ENCODE measurements at regions of chr1 and their contacts with region 1.

Region 1: DNA sequence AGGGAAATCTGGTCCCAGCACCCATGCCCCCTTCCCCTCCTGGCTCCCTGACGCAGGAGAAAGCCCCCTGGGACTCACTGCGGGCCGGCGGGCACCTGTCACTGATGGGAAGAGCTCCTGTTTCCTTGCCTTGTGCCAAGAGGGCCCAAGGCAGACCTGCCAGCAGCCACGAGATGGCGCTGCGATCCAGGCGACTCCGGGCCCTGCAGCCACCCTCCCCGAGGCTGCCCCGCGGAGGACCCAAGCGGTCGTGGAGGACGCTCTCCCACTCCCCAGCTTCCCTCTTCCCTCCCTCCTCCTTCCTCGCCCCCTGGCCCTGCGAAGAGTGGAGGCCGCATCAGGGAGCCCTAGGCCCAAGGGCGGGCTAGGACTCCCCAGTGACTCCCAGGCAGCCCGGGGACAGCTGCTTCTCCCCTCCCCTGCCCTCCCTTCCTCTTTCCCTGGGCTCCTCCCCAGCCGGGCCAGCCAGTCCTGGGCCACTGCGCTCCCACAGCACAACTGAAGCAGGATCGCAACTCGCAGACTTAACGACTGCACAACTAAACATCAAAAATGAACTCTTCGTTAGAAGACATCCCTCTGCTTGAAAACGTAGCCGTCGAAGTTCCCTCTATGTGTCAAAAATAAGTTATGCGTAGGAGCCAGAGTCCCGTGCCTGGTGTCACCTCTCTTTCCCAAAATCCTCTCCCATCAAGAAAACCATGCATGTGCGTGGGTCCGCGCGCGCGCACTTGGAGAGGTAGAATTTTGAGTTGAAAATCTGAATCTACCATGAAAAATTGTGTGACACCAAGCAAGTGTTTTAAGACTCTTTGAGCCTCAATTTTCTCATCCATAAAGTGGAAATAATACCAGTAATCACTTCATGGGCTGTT is 34.2 kb downstream of the BATF3 start:
- DNase-seq: peak; percentile 81
- H3K4me3 ChIP-seq: peak overlapping the region in 2 of 3 experiments; percentile 39 to 40
- H3K27ac ChIP-seq: peak overlapping the region; percentile 41
- H3K4me1 ChIP-seq: peaks cover 27% of the 10 kb centered on the region
- H3K27me3 ChIP-seq: peaks cover 3 to 4% of the 10 kb centered on the region in 2 experiments
- CTCF ChIP-seq: peak; percentile 90 to 98
- POLR2A ChIP-seq: no peak

Region 2: GRCh38 chr1:212595787-212596714 is 69.4 kb before region 1 on chr1:
- CTCF ChIA-PET with region 1: interaction called, 8 read pairs
- POLR2A ChIA-PET with region 1: no interaction called
- dilution Hi-C with region 1: no loop called
- intact Hi-C with region 1: loop called (anchors 1 kb)
- DNase-seq: peak; percentile 96
- H3K4me3 ChIP-seq: peak overlapping the region in 1 of 3 experiments; percentile 41
- H3K27ac ChIP-seq: peak overlapping the region; percentile 99
- H3K4me1 ChIP-seq: peaks cover 15% of the 10 kb centered on the region
- H3K27me3 ChIP-seq: peaks cover 8 to 11% of the 10 kb centered on the region in 2 experiments
- CTCF ChIP-seq: peak; percentile 55 to 81
- POLR2A ChIP-seq: no peak

Region 3: DNA sequence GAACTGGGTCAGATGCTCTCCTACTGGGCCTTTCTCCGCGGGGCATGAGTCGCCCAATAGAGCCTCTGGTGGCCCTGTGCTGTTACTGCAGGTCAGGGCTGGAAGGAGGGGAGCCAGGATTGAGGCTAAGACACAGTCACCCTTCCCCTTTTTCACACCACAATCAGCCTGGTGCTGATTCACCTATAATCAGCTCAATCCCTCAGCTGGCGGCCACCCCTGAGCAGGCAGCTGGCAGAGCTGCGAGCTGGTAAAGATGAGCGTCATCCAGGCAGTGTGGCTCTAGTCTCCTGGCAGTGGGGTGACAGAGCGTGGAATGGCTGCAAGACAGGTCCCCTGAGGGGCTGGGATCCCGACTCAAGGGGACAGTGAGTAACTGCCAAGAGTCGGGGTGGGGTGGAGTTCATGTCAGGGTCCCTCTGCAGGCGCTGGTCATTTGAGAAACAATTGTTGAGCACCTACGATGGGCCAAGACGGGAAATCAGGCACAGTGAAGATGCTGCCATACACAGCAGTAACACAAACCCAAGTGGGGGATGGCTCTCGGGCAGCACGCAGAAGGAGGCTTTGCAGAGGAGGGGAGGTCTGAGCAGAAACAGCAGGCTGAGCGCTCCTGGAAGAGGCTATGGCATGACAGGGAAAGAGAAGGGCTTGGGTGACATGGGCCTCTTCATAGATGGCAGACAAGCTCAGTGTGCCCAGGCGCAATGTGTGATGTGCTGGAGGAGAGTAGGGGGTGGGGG is 35.1 kb before region 1 on chr1:
- CTCF ChIA-PET with region 1: interaction called, 12 read pairs
- POLR2A ChIA-PET with region 1: no interaction called
- dilution Hi-C with region 1: no loop called
- intact Hi-C with region 1: no loop called
- DNase-seq: peak; percentile 42
- H3K4me3 ChIP-seq: no peak overlapping the region
- H3K27ac ChIP-seq: no peak overlapping the region
- H3K4me1 ChIP-seq: peaks cover 9% of the 10 kb centered on the region
- H3K27me3 ChIP-seq: peaks cover 0 to 6% of the 10 kb centered on the region in 2 experiments
- CTCF ChIP-seq: peak; percentile 73 to 86
- POLR2A ChIP-seq: no peak

Region 4: DNA sequence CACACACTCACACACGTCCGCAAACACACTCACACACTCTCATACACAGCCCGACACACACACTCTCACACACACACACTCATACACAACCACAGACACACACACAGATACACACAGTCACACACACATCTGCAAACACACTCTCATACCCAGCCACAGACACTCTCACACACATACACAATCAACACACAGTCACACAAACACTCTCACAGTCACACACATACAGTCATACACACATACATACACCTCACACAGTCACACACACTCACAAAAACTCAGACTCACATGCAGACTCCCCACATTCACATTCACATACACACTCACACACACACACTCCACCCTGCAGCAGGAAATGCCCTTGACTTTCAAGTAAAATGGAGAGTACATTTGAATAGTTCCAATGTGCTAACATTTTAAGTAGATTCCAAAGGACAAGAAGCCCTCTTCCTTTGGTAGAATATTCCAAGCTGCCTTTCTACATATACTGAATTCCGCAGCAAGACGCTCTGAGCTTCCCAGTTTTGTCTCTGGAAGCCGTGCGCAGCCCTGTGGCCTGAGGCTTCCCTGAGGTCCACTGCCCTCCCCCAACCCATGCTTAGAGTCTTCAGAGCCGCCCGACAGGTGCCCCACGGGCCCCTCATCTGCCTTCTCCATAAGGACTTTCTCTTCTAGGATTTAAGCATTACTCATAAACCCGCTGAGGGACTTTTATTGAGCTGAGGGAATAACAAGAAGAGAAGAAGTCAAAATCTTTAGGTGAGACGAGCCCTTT is 24.5 kb after region 1 on chr1:
- CTCF ChIA-PET with region 1: interaction called, 13 read pairs
- POLR2A ChIA-PET with region 1: no interaction called
- dilution Hi-C with region 1: no loop called
- intact Hi-C with region 1: no loop called
- DNase-seq: no peak
- H3K4me3 ChIP-seq: no peak overlapping the region
- H3K27ac ChIP-seq: no peak overlapping the region
- H3K4me1 ChIP-seq: no peaks in the 10 kb centered on the region
- H3K27me3 ChIP-seq: peaks cover 21 to 32% of the 10 kb centered on the region in 2 experiments
- CTCF ChIP-seq: no peak
- POLR2A ChIP-seq: no peak

Region 5: GRCh38 chr1:212721388-212722247 is 56.1 kb after region 1 on chr1:
- CTCF ChIA-PET with region 1: interaction called, 23 read pairs
- POLR2A ChIA-PET with region 1: no interaction called
- dilution Hi-C with region 1: no loop called
- intact Hi-C with region 1: no loop called
- DNase-seq: peak; percentile 25
- H3K4me3 ChIP-seq: no peak overlapping the region
- H3K27ac ChIP-seq: no peak overlapping the region
- H3K4me1 ChIP-seq: peaks cover 16% of the 10 kb centered on the region
- H3K27me3 ChIP-seq: peaks cover 0 to 2% of the 10 kb centered on the region in 2 experiments
- CTCF ChIP-seq: no peak
- POLR2A ChIP-seq: no peak

Region 6: DNA sequence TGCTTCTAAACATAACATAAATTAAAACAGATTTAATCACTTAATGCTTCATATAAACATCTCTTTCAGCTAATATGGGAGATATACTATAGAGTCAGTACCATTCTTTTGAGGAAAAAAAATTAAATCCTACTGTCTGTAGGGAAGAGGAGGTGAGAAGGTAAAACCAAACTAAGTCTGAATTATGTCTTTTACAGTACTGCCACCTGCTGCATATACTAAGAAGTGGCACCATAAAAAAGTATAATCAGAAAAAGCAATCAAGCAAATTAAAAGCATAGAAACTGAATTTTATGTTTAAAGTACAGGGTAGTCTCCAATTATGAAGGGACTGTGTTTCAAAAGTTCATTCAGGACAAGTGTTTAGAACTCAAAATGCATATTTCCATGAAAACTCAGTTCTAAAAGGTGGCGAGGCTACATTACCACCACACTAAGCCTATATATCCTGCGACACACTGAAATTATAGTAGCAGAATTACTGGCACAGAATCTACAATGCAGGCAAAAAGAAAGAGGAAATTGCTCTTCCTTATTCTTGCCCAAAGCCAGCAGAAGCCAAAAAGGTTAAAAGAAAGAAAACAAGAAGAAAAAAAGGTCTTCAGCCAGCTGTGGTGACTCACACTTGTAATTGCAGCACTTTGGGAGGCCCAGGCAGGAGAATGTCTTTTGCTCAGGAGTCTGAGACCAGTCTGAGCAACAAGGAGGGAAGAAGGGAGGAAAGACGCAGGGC is 117.1 kb after region 1 on chr1:
- CTCF ChIA-PET with region 1: interaction called, 28 read pairs
- POLR2A ChIA-PET with region 1: no interaction called
- dilution Hi-C with region 1: no loop called
- intact Hi-C with region 1: loop called (anchors 1 kb)
- DNase-seq: peak; percentile 79
- H3K4me3 ChIP-seq: no peak overlapping the region
- H3K27ac ChIP-seq: peak overlapping the region; percentile 15
- H3K4me1 ChIP-seq: peaks cover 15% of the 10 kb centered on the region
- H3K27me3 ChIP-seq: no peaks in the 10 kb centered on the region
- CTCF ChIP-seq: peak; percentile 34 to 38
- POLR2A ChIP-seq: no peak